ENCODE measurements at regions of chr7 and their contacts with region 1.

Region 1: GRCh38 chr7:139777948-139778841 is at the start of gene HIPK2:
- DNase-seq: peak; percentile 81
- ATAC-seq: peak; percentile 48
- H3K4me3 ChIP-seq: peak within 1 kb of the TSS; percentile 84
- H3K27ac ChIP-seq: peak within 1 kb of the TSS; percentile 99
- H3K4me1 ChIP-seq: peaks cover 46% of the 10 kb centered on the region
- H3K27me3 ChIP-seq: no peaks in the 10 kb centered on the region
- CTCF ChIP-seq: no peak
- total RNA-seq, gene HIPK2: 38.1 and 46.0 TPM in 2 replicates

Region 2: GRCh38 chr7:139502226-139502625 is 276.0 kb before region 1 on chr7:
- CTCF ChIA-PET with region 1: no interaction called
- POLR2A ChIA-PET with region 1: no interaction called
- intact Hi-C with region 1: loop called (anchors 5 kb)
- DNase-seq: no peak
- ATAC-seq: no peak
- H3K4me3 ChIP-seq: no peak overlapping the region
- H3K27ac ChIP-seq: no peak overlapping the region
- H3K4me1 ChIP-seq: no peaks in the 10 kb centered on the region
- H3K27me3 ChIP-seq: no peaks in the 10 kb centered on the region
- CTCF ChIP-seq: no peak

Region 3: DNA sequence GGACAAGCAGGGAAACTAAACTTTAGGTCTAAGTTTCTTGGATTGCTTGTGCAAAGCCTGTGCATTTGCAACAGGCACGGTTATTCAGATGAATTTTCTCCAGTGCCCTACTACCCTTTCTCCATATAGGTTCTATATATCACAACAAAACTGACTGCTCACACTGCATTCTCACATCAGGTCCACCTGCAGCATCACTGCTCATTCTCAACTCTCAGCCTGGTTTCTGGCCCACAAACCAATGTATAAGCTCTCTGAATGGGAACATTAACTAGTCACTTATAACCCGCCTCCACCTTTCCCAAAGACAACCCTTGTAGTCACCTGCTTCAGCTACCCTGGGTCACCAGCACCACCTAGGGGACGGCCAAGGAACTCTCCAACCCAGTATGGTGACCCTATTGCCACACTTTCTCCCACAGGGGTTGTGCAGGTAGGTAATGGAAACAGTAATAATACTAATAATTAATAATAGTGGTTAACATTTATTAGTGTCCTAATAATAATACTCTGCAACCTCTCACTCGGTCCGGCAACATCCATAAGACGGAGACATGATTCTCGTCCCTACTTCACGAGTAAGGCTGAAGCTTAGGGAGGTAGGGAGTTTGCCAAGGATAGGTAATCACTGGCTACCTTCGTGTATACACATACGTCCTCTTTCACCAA is 157.4 kb before region 1 on chr7:
- CTCF ChIA-PET with region 1: no interaction called
- POLR2A ChIA-PET with region 1: no interaction called
- intact Hi-C with region 1: loop called (anchors 1 kb)
- DNase-seq: peak; percentile 57
- ATAC-seq: peak; percentile 60
- H3K4me3 ChIP-seq: no peak overlapping the region
- H3K27ac ChIP-seq: no peak overlapping the region
- H3K4me1 ChIP-seq: peaks cover 12% of the 10 kb centered on the region
- H3K27me3 ChIP-seq: no peaks in the 10 kb centered on the region
- CTCF ChIP-seq: peak; percentile 73

Region 4: DNA sequence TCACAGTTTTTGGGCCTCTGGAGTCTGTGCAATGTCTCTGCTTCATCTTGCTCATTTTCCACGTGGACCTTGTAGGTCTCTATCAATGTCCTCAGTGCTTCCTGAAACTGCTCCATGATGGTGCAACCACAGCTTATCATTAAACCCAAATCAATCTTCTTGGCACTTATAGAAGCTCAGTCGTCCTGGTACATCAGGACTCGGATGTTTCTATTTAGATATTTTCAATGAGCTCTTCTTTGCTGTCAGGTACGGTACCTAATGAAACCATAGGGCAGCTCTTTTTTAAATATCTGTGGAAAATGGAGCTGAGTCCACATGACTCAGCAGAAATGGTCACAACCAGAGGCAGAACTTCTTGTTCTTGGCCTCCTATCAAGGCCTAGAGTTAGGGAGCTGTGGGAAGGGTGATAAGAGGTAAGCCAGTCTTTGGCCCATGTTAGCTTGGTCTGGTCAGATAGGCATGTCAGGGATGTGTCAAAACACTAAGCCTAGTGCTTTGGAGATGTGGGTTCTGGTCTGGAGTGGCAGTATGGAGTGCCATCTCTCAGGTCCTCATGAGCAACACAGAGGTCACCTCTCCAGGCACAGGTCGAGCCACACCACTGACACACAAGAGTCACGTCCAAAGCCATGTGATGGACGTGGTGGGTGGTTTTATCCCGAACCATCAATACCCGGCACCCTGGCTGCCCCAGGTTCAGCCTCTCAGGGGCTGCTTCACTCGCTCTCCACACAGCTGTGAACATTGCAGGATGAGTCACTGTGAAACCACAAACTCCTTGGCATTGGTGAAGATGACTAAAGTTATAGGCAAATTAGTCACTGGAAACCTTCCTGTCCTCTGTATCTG is 137.9 kb after region 1 on chr7:
- CTCF ChIA-PET with region 1: no interaction called
- POLR2A ChIA-PET with region 1: no interaction called
- intact Hi-C with region 1: loop called (anchors 2 kb)
- DNase-seq: peak; percentile 98
- ATAC-seq: peak; percentile 83
- H3K4me3 ChIP-seq: no peak overlapping the region
- H3K27ac ChIP-seq: peak overlapping the region; percentile 96
- H3K4me1 ChIP-seq: peaks cover 42% of the 10 kb centered on the region
- H3K27me3 ChIP-seq: no peaks in the 10 kb centered on the region
- CTCF ChIP-seq: no peak

Region 5: DNA sequence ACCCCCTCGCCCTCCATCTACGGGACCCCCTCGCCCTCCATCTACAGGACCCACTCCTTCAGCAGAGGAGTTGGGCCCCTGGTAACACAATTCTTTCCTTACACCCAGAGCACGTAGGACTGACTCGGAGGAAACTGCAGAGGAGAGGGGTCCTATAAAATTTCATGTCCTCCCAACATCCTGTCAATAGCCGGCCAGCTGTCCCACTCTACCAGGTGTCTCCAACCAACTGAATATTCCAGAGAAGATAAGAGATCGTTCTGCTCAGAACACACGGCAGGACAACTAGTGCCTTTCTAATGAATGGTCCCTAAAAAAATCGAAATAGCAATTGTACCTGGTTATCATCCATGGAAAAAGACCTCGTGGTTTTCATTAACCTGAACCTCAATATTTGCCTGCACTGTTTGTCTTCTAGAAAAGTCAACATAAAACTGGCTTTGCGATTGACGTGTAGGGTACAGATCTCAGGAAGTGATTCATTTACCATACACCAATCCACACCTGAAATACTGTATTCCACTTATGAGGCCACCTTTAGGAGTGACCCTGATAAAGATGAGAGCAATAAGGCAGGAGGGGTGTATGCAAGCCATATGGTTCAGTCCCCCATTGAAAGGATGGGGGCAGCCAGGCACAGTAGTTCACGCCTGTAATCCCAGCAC is 172.8 kb after region 1 on chr7:
- CTCF ChIA-PET with region 1: no interaction called
- POLR2A ChIA-PET with region 1: no interaction called
- intact Hi-C with region 1: loop called (anchors 2 kb)
- DNase-seq: peak; percentile 77
- ATAC-seq: peak; percentile 91
- H3K4me3 ChIP-seq: no peak overlapping the region
- H3K27ac ChIP-seq: peak overlapping the region; percentile 79
- H3K4me1 ChIP-seq: peaks cover 12% of the 10 kb centered on the region
- H3K27me3 ChIP-seq: no peaks in the 10 kb centered on the region
- CTCF ChIP-seq: no peak